Calu3 (cell line): ENCODE measurements at regions of chr3 and their contacts with region 1.

Region 1: GRCh38 chr3:71022551-71023335 is 560.8 kb downstream of the FOXP1 start:
- DNase-seq: peak; percentile 20
- H3K4me3 Mint-ChIP-seq: no peak overlapping the region
- H3K27ac Mint-ChIP-seq: no peak overlapping the region
- H3K4me1 Mint-ChIP-seq: peaks cover 53% of the 10 kb centered on the region
- H3K27me3 Mint-ChIP-seq: no peaks in the 10 kb centered on the region
- CTCF ChIP-seq: no peak

Region 2: GRCh38 chr3:70824773-70825172 is 198.0 kb before region 1 on chr3:
- CTCF ChIA-PET with region 1: interaction called, 10 read pairs
- intact Hi-C with region 1: no loop called
- DNase-seq: peak; percentile 39
- H3K4me3 Mint-ChIP-seq: no peak overlapping the region
- H3K27ac Mint-ChIP-seq: no peak overlapping the region
- H3K4me1 Mint-ChIP-seq: no peaks in the 10 kb centered on the region
- H3K27me3 Mint-ChIP-seq: no peaks in the 10 kb centered on the region
- CTCF ChIP-seq: no peak

Region 3: GRCh38 chr3:70916375-70917065 is 106.2 kb before region 1 on chr3:
- CTCF ChIA-PET with region 1: no interaction called
- intact Hi-C with region 1: no loop called
- DNase-seq: no peak
- H3K4me3 Mint-ChIP-seq: no peak overlapping the region
- H3K27ac Mint-ChIP-seq: no peak overlapping the region
- H3K4me1 Mint-ChIP-seq: no peaks in the 10 kb centered on the region
- H3K27me3 Mint-ChIP-seq: no peaks in the 10 kb centered on the region
- CTCF ChIP-seq: no peak

Region 4: GRCh38 chr3:71006810-71007785 is 15.6 kb before region 1 on chr3:
- CTCF ChIA-PET with region 1: interaction called, 11 read pairs
- intact Hi-C with region 1: loop called (anchors 2 kb)
- DNase-seq: peak; percentile 29
- H3K4me3 Mint-ChIP-seq: no peak overlapping the region
- H3K27ac Mint-ChIP-seq: peak overlapping the region; percentile 87
- H3K4me1 Mint-ChIP-seq: peaks cover 23% of the 10 kb centered on the region
- H3K27me3 Mint-ChIP-seq: no peaks in the 10 kb centered on the region
- CTCF ChIP-seq: no peak

Region 5: DNA sequence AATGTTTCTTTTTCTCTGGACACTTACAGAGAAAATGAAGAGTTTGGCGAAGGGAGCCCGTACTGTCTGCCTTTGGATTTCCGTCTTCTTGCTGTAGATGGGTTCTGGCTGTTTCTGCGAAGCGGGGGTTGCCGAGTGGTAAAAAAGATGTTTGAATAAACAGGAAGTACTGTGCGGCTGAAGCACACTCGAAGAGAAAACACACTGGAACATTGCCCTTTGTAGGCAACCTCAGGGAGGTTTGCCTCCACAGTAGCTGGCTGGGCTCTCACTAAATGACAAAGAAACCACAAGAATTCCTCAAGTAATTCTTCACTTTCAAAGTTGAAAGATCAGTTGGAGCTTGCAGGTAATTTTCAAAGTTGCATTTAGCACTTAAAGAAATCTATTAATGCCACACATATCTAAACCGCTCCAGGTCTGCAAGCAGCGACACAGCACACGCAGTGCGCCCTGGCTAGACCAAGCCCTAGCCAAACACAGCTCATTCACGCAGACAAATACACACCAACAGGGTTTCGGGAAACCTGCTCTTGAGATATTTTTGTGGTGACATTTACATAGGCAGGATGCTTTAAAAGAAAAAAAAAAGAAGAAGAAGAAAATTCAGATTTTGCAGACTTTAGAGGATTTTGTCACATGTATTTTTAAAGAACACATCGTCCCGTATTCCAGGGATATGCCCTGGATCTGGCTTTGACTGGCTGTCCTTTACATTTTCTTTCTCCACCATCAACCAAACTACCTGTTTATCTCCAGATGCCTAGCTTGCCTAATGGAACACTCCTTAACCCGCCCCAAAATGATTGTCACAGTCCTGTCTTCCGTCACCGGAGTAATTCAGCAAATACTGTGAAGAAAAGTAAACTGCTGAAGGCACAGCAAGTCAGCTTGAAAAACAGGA is 108.0 kb after region 1 on chr3:
- CTCF ChIA-PET with region 1: no interaction called
- intact Hi-C with region 1: no loop called
- DNase-seq: peak; percentile 45
- H3K4me3 Mint-ChIP-seq: peak overlapping the region; percentile 88
- H3K27ac Mint-ChIP-seq: peak overlapping the region; percentile 89
- H3K4me1 Mint-ChIP-seq: peaks cover 59% of the 10 kb centered on the region
- H3K27me3 Mint-ChIP-seq: no peaks in the 10 kb centered on the region
- CTCF ChIP-seq: no peak